Right ventricle myocardium inferior (tissue), 1 donor: ENCODE measurements at regions of chr22 and their contacts with region 1.

Region 1: GRCh38 chr22:43136255-43136654 is 6.9 kb downstream of the MCAT start:
- DNase-seq: peak; percentile 72
- ATAC-seq: peak; percentile 36

Region 2: GRCh38 chr22:42863349-42863961 is 272.8 kb before region 1 on chr22:
- intact Hi-C with region 1: loop called (anchors 10 kb)
- DNase-seq: no peak
- ATAC-seq: no peak

Region 3: GRCh38 chr22:43168416-43169309 is 32.4 kb after region 1 on chr22:
- intact Hi-C with region 1: no loop called
- DNase-seq: peak; percentile 66
- ATAC-seq: no peak